ENCODE measurements at regions of chr22 and their contacts with region 1.

Region 1: GRCh38 chr22:41746567-41747400 is 47.5 kb downstream of the MEI1 start:
- DNase-seq: peak; percentile 46 to 77
- H3K4me3 ChIP-seq: no peak overlapping the region
- H3K27ac ChIP-seq: no peak overlapping the region
- H3K4me1 ChIP-seq: no peaks in the 10 kb centered on the region
- H3K27me3 ChIP-seq: no peaks in the 10 kb centered on the region; a peak in 1 of 7 replicates
- CTCF ChIP-seq: peak; percentile 83 to 93 (median 85)
- EP300 ChIP-seq: no peak
- POLR2A ChIP-seq: no peak
- RAD21 ChIP-seq: peak; percentile 79 to 84

Region 2: DNA sequence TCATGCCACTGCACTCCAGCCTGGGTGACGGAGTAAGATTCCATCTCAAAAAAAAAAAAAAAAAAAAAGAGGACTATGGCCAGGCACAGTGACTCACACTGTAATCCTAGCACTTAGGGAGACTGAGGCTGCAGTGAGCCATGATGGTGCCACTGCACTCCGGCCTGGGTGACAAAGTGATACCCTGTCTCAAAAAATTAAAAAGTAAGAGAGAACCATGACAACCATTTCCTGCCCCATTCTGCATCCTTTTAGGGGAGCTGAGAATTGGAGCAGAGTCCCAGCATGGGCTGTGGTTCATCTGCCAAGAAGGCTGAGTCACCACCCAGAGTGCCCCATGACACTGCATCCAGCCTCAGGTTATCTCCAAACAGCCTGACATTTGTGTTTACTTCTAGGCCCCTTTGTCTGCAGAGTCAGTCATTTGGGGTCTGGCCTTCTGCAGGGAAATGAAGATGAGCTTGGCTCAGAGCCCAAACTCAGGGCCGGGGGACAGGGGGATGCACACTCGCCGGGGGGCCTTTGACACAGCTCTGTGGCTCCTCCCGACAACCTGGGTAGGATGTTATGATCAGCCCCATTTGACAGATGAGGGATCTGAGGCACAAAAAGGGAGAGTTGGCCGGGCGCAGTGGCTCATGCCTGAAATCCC is 181.3 kb before region 1 on chr22:
- CTCF ChIA-PET with region 1: no interaction called
- POLR2A ChIA-PET with region 1: no interaction called
- DNase-seq: no peak
- H3K4me3 ChIP-seq: no peak overlapping the region
- H3K27ac ChIP-seq: no peak overlapping the region
- H3K4me1 ChIP-seq: peaks cover 4 to 28% (median 19%) of the 10 kb centered on the region in 4 experiments
- H3K27me3 ChIP-seq: 0 out of 7 replicates have a peak, but pooled peaks cover 0 to 3% (median 0%) of the 10 kb centered on the region in 4 experiments
- CTCF ChIP-seq: no peak
- EP300 ChIP-seq: no peak
- POLR2A ChIP-seq: no peak
- RAD21 ChIP-seq: no peak

Region 3: DNA sequence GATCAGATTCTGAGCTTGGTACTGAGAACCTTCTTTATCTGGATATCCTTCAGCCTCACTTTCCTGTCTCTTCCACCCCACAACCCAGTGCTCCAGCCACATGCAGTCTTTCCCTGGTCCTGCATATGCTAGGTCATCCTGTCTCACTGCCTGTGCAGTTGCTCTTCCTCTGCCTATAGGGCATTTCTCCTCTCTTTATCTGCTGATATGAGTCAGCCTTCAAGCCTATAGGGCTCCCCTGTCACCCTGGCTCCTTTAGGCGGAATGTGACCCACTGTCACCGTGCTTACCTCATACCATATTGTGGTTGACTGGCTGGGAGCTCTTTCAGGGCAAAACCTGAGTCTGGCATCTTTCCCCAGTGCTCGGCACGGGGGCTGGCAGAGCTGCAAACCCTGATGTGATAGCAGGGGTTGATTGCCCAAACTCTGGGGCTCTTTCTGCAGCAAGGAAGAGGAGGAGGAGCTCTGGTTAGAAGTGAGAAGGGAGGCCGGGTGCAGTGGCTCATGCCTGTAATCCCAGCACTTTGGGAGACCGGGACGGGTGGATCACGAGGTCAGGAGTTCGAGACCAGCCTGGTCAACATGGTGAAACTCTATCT is 21.2 kb before region 1 on chr22:
- CTCF ChIA-PET with region 1: interaction called, 16 read pairs
- POLR2A ChIA-PET with region 1: interaction called, 3 read pairs
- DNase-seq: no peak
- H3K4me3 ChIP-seq: no peak overlapping the region
- H3K27ac ChIP-seq: no peak overlapping the region
- H3K4me1 ChIP-seq: no peaks in the 10 kb centered on the region
- H3K27me3 ChIP-seq: no peaks in the 10 kb centered on the region
- CTCF ChIP-seq: no peak
- EP300 ChIP-seq: no peak
- POLR2A ChIP-seq: no peak
- RAD21 ChIP-seq: no peak

Region 4: DNA sequence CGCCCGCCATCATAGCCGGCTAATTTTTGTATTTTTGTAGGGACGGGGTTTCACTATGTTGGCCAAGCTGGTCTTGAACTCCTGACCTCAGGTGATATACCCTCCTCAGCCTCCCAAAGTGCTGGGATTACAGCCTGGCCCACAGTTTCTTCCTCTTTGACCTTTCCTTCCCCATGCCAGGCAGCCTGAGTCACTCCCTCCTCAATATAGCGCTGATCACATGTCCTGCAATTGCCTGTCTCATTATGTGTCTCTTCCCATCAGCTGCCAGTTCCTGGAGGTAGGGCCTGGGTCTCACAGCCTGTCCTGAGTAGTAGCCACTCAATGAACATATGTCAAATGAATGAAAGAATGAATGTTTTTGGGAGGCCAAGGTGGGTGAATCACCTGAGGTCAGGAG is 10.7 kb after region 1 on chr22:
- CTCF ChIA-PET with region 1: interaction called, 54 read pairs
- POLR2A ChIA-PET with region 1: interaction called, 3 read pairs
- DNase-seq: no peak
- H3K4me3 ChIP-seq: no peak overlapping the region
- H3K27ac ChIP-seq: no peak overlapping the region
- H3K4me1 ChIP-seq: peaks cover 0 to 7% (median 4%) of the 10 kb centered on the region in 4 experiments; a peak in 5 of 7 replicates
- H3K27me3 ChIP-seq: no peaks in the 10 kb centered on the region; a peak in 1 of 7 replicates
- CTCF ChIP-seq: no peak
- EP300 ChIP-seq: no peak
- POLR2A ChIP-seq: no peak
- RAD21 ChIP-seq: no peak

Region 5: GRCh38 chr22:41780746-41781505 is 34.1 kb after region 1 on chr22:
- CTCF ChIA-PET with region 1: interaction called, 21 read pairs
- POLR2A ChIA-PET with region 1: no interaction called
- DNase-seq: no peak
- H3K4me3 ChIP-seq: no peak overlapping the region
- H3K27ac ChIP-seq: no peak overlapping the region
- H3K4me1 ChIP-seq: no peaks in the 10 kb centered on the region; a peak in 1 of 7 replicates
- H3K27me3 ChIP-seq: no peaks in the 10 kb centered on the region; a peak in 2 of 7 replicates
- CTCF ChIP-seq: no peak
- EP300 ChIP-seq: no peak
- POLR2A ChIP-seq: no peak
- RAD21 ChIP-seq: no peak

Region 6: GRCh38 chr22:41800348-41801146 is 53.8 kb after region 1 on chr22 and contains the start of gene CCDC134:
- CTCF ChIA-PET with region 1: interaction called, 20 read pairs
- POLR2A ChIA-PET with region 1: interaction called, 13 read pairs
- DNase-seq: peak; percentile 50 to 93
- H3K4me3 ChIP-seq: peak within 1 kb of the TSS; percentile 78 to 91 (median 86)
- H3K27ac ChIP-seq: peak within 1 kb of the TSS; percentile 73
- H3K4me1 ChIP-seq: peaks cover 8 to 15% (median 9%) of the 10 kb centered on the region in 4 experiments
- H3K27me3 ChIP-seq: no peaks in the 10 kb centered on the region
- CTCF ChIP-seq: no peak
- EP300 ChIP-seq: 0 out of 3 replicates have a peak, but pooled peaks of 1 of the 2 experiments have one; percentile 14
- POLR2A ChIP-seq: peak; percentile 83 to 94
- RAD21 ChIP-seq: no peak
- total RNA-seq, gene CCDC134: 20.0 and 21.4 TPM in 2 replicates

Measured in H1 (cell line).